ENCODE measurements at regions of chr7 and their contacts with region 1.

Region 1: DNA sequence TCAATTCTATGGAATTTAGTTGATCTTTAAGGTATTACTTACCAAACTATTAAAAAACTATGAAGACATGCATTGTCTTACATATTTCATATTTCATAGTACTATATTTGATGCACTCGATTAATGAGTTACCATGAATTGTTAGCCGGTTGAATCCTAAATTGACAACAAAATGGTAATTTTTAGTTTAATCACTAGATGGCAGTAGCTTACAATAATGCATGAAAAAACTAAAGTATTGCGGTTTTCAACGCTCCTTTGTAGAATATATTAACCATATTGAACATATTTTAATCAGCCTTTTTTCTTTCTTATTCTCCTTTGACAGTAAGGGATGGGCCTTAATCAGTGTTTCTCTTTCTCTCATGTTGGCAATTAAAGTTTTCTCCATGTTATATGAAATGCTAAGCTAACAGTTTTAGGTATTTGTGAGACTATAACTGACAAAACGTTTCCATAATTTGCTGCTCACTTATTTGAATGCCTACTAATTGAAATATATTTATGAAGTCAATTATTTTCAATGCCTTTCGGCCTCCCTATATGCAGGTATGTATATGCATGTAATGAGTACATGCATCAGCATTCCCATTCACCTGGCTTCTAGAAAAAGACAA is 48.5 kb upstream of the ARL4A start:
- DNase-seq: no peak
- ATAC-seq: peak; percentile 54; the same call in 1 of the 2 replicates
- H3K4me3 ChIP-seq: no peak overlapping the region
- H3K27ac ChIP-seq: no peak overlapping the region
- H3K4me1 ChIP-seq: no peaks in the 10 kb centered on the region; the same call in 1 of the 2 replicates
- H3K27me3 ChIP-seq: peaks cover 3% of the 10 kb centered on the region; the same call in 1 of the 2 replicates
- CTCF ChIP-seq: peak; percentile 66; the same call in 1 of the 2 replicates

Region 2: GRCh38 chr7:12518920-12519681 is 119.9 kb before region 1 on chr7:
- CTCF ChIA-PET with region 1: interaction called, 11 read pairs
- POLR2A ChIA-PET with region 1: interaction called, 7 read pairs
- in situ Hi-C with region 1: no loop called
- intact Hi-C with region 1: no loop called
- DNase-seq: no peak
- ATAC-seq: peak; percentile 92
- H3K4me3 ChIP-seq: no peak overlapping the region
- H3K27ac ChIP-seq: no peak overlapping the region
- H3K4me1 ChIP-seq: no peaks in the 10 kb centered on the region
- H3K27me3 ChIP-seq: peaks cover 8% of the 10 kb centered on the region
- CTCF ChIP-seq: peak; percentile 82

Region 3: GRCh38 chr7:13262929-13263530 is 624.1 kb after region 1 on chr7:
- CTCF ChIA-PET with region 1: interaction called, 3 read pairs
- POLR2A ChIA-PET with region 1: no interaction called
- in situ Hi-C with region 1: no loop called
- intact Hi-C with region 1: loop called (anchors 2 kb)
- DNase-seq: no peak
- ATAC-seq: no peak; the same call in none of the 2 replicates
- H3K4me3 ChIP-seq: no peak overlapping the region
- H3K27ac ChIP-seq: no peak overlapping the region
- H3K4me1 ChIP-seq: no peaks in the 10 kb centered on the region
- H3K27me3 ChIP-seq: no peaks in the 10 kb centered on the region; the same call in 1 of the 2 replicates
- CTCF ChIP-seq: peak; percentile 67; the same call in 1 of the 2 replicates

Measured in Panc1 (cell line).